Natural killer cell (primary cell): ENCODE measurements at regions of chr13 and their contacts with region 1.

Region 1: DNA sequence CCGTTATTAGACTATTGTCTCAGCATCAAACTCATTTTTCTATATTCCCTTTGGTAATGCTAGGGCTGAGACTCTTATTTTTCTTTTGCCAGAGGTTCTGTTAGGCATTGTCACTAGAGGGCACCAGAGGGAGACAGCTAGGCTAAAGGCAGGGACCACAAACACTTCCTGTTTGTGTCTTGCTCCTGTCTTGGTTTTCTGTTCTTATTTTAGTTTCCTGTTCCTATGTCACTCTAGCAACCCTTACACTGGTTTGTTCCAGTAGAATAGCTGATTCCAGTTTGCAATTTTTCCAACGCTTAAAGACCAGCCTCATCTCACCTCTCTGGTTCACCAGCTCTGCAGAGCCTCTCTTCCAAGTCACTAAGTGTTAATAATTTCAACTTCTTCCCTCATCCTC is 772.0 kb downstream of the DIAPH3 start:
- DNase-seq: peak in 1 of 2 donors; percentile 85
- ATAC-seq: peak; percentile 86 to 94 (median 89)
- H3K4me3 ChIP-seq: no peak overlapping the region
- H3K4me3 Mint-ChIP-seq: no peak overlapping the region
- H3K27ac ChIP-seq: peak overlapping the region; percentile 24
- H3K27ac Mint-ChIP-seq: no peak overlapping the region
- H3K4me1 ChIP-seq: peaks cover 3% of the 10 kb centered on the region
- H3K4me1 Mint-ChIP-seq: no peaks in the 10 kb centered on the region
- H3K27me3 ChIP-seq: no peaks in the 10 kb centered on the region
- H3K27me3 Mint-ChIP-seq: peaks cover 17 to 25% of the 10 kb centered on the region in 2 donors
- CTCF ChIP-seq: peak; percentile 68

Region 2: GRCh38 chr13:59318320-59318930 is 73.3 kb before region 1 on chr13:
- intact Hi-C with region 1: loop called (anchors 2 kb)
- DNase-seq: peak; percentile 16 to 46
- ATAC-seq: no peak
- H3K4me3 ChIP-seq: no peak overlapping the region
- H3K4me3 Mint-ChIP-seq: no peak overlapping the region
- H3K27ac ChIP-seq: no peak overlapping the region
- H3K27ac Mint-ChIP-seq: no peak overlapping the region
- H3K4me1 ChIP-seq: no peaks in the 10 kb centered on the region
- H3K4me1 Mint-ChIP-seq: no peaks in the 10 kb centered on the region
- H3K27me3 ChIP-seq: no peaks in the 10 kb centered on the region
- H3K27me3 Mint-ChIP-seq: no peaks in the 10 kb centered on the region
- CTCF ChIP-seq: peak; percentile 42

Region 3: DNA sequence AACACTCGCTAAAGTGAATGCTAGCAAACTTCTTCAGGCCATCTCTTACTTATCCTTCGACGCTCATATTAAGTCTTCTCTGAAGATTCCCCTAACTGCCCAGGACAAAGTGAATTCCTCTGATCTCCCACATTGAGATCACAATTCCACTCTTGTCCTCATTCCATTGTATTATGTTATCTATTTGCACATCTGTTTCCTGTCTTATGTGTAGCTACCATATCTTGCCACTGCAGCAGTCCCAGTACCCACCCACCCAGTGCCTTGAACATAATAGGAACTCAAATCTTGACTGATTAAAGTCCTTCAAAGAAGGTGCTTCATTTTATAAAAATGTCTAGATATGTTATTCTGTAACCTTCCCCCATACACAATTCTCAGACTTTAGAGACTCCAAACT is 69.7 kb after region 1 on chr13:
- intact Hi-C with region 1: no loop called
- DNase-seq: no peak
- ATAC-seq: no peak
- H3K4me3 ChIP-seq: no peak overlapping the region
- H3K4me3 Mint-ChIP-seq: no peak overlapping the region
- H3K27ac ChIP-seq: no peak overlapping the region
- H3K27ac Mint-ChIP-seq: no peak overlapping the region
- H3K4me1 ChIP-seq: no peaks in the 10 kb centered on the region
- H3K4me1 Mint-ChIP-seq: no peaks in the 10 kb centered on the region
- H3K27me3 ChIP-seq: no peaks in the 10 kb centered on the region
- H3K27me3 Mint-ChIP-seq: peaks cover 4 to 6% of the 10 kb centered on the region in 2 donors
- CTCF ChIP-seq: no peak

Region 4: DNA sequence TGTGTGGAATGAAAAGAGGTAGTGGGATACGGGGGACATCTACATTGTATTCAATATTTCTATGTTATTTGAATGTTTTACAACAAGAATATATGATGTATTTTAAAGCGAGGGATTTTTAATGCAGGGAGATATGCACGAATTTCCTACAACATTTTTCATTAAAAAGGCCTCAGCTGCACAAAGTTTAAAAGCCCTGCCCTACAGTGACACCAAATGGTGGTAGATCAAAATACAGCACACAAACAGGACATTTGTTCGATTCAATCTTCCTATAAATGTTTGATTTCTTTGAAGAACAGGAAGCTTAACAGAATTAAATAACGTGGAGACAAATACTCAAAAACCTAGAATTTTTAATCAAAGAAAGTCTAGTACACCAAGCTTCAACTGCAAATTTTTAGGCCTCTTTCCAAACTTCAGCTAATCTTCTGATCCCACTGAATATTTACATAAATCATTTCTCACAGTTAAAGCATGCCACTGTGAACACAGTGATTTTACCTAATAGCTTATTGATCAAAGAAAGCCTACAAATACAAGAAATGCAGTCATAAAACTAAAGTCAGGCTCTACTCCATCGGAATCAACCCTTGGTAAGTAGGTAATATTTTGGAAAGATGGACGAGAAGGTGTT is 514.8 kb after region 1 on chr13:
- intact Hi-C with region 1: no loop called
- DNase-seq: peak in 1 of 2 donors; percentile 19
- ATAC-seq: no peak
- H3K4me3 ChIP-seq: no peak overlapping the region
- H3K4me3 Mint-ChIP-seq: no peak overlapping the region
- H3K27ac ChIP-seq: no peak overlapping the region
- H3K27ac Mint-ChIP-seq: no peak overlapping the region
- H3K4me1 ChIP-seq: no peaks in the 10 kb centered on the region
- H3K4me1 Mint-ChIP-seq: peaks cover under 1 to 3% of the 10 kb centered on the region in 2 donors
- H3K27me3 ChIP-seq: no peaks in the 10 kb centered on the region
- H3K27me3 Mint-ChIP-seq: no peaks in the 10 kb centered on the region
- CTCF ChIP-seq: peak; percentile 13

Region 5: DNA sequence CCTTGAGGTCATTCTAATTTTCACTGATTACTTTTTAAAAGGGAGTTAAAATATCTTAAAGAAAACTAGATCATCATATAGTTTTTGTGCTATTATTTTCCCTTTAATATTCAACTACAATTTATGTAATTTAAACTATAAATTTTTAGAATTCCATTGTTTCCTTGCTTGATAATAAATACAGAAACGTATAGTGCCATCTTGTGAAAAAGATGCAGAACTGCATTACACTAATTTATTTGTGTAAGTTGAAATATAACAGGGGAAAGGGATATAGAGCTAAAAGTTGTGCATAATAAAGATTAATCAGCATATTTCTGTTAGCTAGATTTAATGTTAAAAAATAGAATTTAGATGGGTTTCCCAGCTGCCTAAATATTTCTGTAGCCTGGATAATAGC is 943.8 kb after region 1 on chr13:
- intact Hi-C with region 1: loop called (anchors 10 kb)
- DNase-seq: peak in 1 of 2 donors; percentile 7
- ATAC-seq: no peak
- H3K4me3 ChIP-seq: no peak overlapping the region
- H3K4me3 Mint-ChIP-seq: no peak overlapping the region
- H3K27ac ChIP-seq: no peak overlapping the region
- H3K27ac Mint-ChIP-seq: no peak overlapping the region
- H3K4me1 ChIP-seq: no peaks in the 10 kb centered on the region
- H3K4me1 Mint-ChIP-seq: no peaks in the 10 kb centered on the region
- H3K27me3 ChIP-seq: peaks cover 4% of the 10 kb centered on the region
- H3K27me3 Mint-ChIP-seq: peaks cover 18 to 26% of the 10 kb centered on the region in 2 donors
- CTCF ChIP-seq: peak; percentile 40

Region 6: DNA sequence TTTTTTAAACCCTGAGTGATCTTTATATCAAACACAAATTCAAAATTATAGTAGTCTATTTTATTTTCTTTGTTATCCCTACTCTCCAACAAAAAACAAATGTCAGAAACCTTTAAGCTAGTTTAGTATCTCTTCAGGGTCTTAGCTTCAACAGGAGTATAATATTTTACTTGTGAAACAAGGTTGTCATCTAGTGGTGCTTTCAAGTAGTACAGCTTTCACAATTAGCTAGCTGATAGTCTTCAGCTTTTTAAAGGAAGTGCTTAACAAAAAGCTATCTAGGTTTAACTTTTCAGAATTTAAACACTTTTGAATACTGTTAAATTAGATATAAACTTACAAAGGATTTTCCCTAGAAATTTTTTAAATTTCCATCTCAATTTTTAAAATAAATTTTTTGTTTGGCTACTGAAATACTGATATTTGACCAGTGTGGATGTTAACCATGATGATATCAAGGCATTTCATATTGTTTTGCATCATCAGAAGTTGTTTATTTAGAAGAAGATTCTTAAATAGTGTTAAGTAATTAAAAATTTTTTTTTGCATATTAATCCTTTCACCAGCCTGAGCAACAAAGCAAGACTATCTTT is 1039.5 kb after region 1 on chr13:
- intact Hi-C with region 1: loop called (anchors 5 kb)
- DNase-seq: peak in 1 of 2 donors; percentile 78
- ATAC-seq: peak; percentile 82 to 89 (median 84)
- H3K4me3 ChIP-seq: no peak overlapping the region
- H3K4me3 Mint-ChIP-seq: no peak overlapping the region
- H3K27ac ChIP-seq: no peak overlapping the region
- H3K27ac Mint-ChIP-seq: no peak overlapping the region
- H3K4me1 ChIP-seq: peaks cover 3% of the 10 kb centered on the region
- H3K4me1 Mint-ChIP-seq: peaks cover 32 to 34% of the 10 kb centered on the region in 2 donors
- H3K27me3 ChIP-seq: no peaks in the 10 kb centered on the region
- H3K27me3 Mint-ChIP-seq: no peaks in the 10 kb centered on the region
- CTCF ChIP-seq: peak; percentile 97